ENCODE measurements at regions of chr14 and their contacts with region 1.

Region 1: DNA sequence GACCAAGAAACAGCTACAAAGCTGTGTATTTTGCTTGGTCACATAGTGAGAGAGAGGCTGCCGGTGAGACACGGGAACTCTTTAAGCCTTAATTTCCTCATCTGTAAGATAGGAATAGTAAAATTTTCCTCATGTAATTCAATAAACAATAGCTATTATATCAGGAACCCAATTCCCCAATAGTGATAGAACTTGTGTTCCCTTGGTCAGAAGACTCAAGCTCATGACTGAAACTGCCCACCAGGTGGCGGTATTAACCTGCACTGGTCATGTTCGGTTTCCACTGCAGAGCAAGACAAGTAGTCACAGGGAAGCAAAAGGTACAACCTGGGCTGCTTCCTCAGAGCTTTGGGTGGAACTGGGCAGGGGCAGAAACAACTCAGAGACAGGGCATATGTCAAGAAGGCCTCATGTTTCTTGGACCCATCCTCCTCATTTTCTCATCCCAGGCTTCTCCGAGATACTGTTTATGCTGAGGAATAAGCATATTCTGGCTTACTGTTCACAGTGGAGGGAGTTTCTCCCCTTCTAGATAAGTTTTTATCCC is 4.2 kb upstream of the AJUBA start:
- DNase-seq: peak; percentile 84 to 95 (median 89)
- ATAC-seq: peak; percentile 20 to 28
- H3K4me3 ChIP-seq: no peak overlapping the region
- H3K27ac ChIP-seq: no peak overlapping the region
- H3K4me1 ChIP-seq: no peaks in the 10 kb centered on the region
- H3K27me3 ChIP-seq: no peaks in the 10 kb centered on the region

Region 2: DNA sequence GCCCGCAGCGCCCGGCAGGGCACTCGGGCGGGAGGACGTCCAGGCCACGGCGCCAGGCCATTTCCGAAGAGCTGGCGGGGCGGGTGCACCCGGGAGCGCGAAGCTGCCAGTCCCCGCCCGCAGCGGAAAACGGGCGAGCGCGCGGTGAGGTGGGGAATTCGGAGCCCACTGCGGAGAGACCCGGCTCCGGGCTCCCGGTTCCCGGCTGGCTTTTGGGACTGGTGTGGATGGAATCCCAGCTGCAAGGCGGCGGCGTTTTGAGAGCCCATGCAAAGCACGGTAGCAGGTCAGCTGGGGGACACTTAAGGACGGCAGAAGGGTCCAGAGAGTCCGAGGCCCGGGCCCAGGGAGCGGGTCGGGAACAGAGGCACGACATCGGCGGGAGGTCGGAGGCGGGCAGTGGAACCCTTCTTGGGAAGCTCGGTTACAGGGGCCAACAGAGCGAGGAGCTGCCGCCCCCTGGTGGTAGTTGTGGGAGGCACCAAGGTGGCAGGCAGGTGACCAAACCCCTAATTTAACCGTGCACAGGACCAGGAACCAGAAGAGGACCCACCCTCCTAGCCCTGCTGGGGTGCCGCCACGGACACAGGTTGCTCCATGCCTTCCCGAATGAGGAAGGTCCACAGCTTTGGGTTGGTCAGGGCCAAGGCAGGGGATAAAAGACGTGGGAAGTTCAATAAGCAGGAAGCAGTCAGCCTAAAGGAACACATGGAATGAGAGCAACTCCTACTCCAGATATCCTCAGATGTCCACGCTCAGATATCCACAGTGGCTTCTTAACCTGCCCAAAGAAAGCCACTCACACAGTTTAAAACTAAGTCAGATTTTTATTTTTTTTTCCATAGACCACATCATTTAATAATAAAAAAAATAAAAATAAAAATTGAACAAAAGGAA is 71.4 kb after region 1 on chr14:
- intact Hi-C with region 1: loop called (anchors 2 to 5 kb)
- DNase-seq: peak; percentile 87 to 94 (median 94)
- ATAC-seq: peak; percentile 73 to 81
- H3K4me3 ChIP-seq: peak overlapping the region; percentile 83
- H3K27ac ChIP-seq: no peak overlapping the region
- H3K4me1 ChIP-seq: peaks cover 5% of the 10 kb centered on the region
- H3K27me3 ChIP-seq: no peaks in the 10 kb centered on the region

Region 3: GRCh38 chr14:23104591-23105347 is 118.2 kb after region 1 on chr14 and contains the start of gene CIROP:
- intact Hi-C with region 1: no loop called
- DNase-seq: no peak
- ATAC-seq: no peak
- H3K4me3 ChIP-seq: no peak within 1 kb of the TSS
- H3K27ac ChIP-seq: no peak within 1 kb of the TSS
- H3K4me1 ChIP-seq: no peaks in the 10 kb centered on the region
- H3K27me3 ChIP-seq: no peaks in the 10 kb centered on the region
- total RNA-seq, gene CIROP: not detected